ENCODE measurements at regions of chr1 and their contacts with region 1.

Region 1: GRCh38 chr1:234772345-234773147 is 162.6 kb upstream of the IRF2BP2 start:
- DNase-seq: peak; percentile 95
- H3K4me3 Mint-ChIP-seq: peak overlapping the region; percentile 49
- H3K27ac Mint-ChIP-seq: peak overlapping the region; percentile 84
- H3K4me1 Mint-ChIP-seq: peaks cover 54% of the 10 kb centered on the region
- H3K27me3 Mint-ChIP-seq: no peaks in the 10 kb centered on the region

Region 2: GRCh38 chr1:234599617-234600417 is 172.7 kb before region 1 on chr1:
- CTCF ChIA-PET with region 1: interaction called, 3 read pairs
- POLR2A ChIA-PET with region 1: interaction called, 6 read pairs
- intact Hi-C with region 1: loop called (anchors 2 kb)
- DNase-seq: peak; percentile 82
- H3K4me3 Mint-ChIP-seq: peak overlapping the region; percentile 85
- H3K27ac Mint-ChIP-seq: peak overlapping the region; percentile 100
- H3K4me1 Mint-ChIP-seq: peaks cover 54% of the 10 kb centered on the region
- H3K27me3 Mint-ChIP-seq: no peaks in the 10 kb centered on the region

Region 3: GRCh38 chr1:234722904-234723720 is 49.4 kb before region 1 on chr1:
- CTCF ChIA-PET with region 1: interaction called, 4 read pairs
- POLR2A ChIA-PET with region 1: interaction called, 14 read pairs
- intact Hi-C with region 1: loop called (anchors 1 kb)
- DNase-seq: peak; percentile 91
- H3K4me3 Mint-ChIP-seq: peak overlapping the region; percentile 60
- H3K27ac Mint-ChIP-seq: peak overlapping the region; percentile 96
- H3K4me1 Mint-ChIP-seq: peaks cover 66% of the 10 kb centered on the region
- H3K27me3 Mint-ChIP-seq: no peaks in the 10 kb centered on the region

Region 4: GRCh38 chr1:234730770-234731568 is 41.6 kb before region 1 on chr1:
- CTCF ChIA-PET with region 1: interaction called, 7 read pairs
- POLR2A ChIA-PET with region 1: interaction called, 3 read pairs
- intact Hi-C with region 1: loop called (anchors 1 kb)
- DNase-seq: peak; percentile 78
- H3K4me3 Mint-ChIP-seq: peak overlapping the region; percentile 40
- H3K27ac Mint-ChIP-seq: peak overlapping the region; percentile 99
- H3K4me1 Mint-ChIP-seq: peaks cover 77% of the 10 kb centered on the region
- H3K27me3 Mint-ChIP-seq: no peaks in the 10 kb centered on the region

Region 5: DNA sequence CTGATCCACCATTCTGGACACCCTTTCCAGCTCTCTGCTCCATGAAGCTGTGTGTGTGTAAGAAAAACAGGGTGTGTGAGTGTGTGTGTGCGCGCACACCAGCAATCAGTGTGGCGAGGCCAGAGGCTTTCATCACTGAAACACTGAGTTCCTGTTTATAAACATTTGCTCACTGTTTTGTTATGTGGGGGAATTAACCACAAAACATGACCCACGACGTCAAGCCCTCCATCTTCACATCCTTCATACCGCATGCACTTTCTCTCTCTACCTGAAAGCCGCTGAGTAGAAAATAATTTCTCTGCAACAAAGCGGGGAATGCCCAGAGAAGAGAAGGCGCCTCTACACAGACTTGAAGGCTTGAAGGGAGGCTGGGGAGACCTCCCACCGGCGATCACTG is 13.7 kb before region 1 on chr1:
- CTCF ChIA-PET with region 1: interaction called, 4 read pairs
- POLR2A ChIA-PET with region 1: no interaction called
- intact Hi-C with region 1: loop called (anchors 1 kb)
- DNase-seq: peak; percentile 68
- H3K4me3 Mint-ChIP-seq: peak overlapping the region; percentile 18
- H3K27ac Mint-ChIP-seq: peak overlapping the region; percentile 64
- H3K4me1 Mint-ChIP-seq: peaks cover 24% of the 10 kb centered on the region
- H3K27me3 Mint-ChIP-seq: peaks cover 4% of the 10 kb centered on the region

Region 6: GRCh38 chr1:234881893-234882771 is 109.6 kb after region 1 on chr1:
- CTCF ChIA-PET with region 1: interaction called, 3 read pairs
- POLR2A ChIA-PET with region 1: no interaction called
- intact Hi-C with region 1: loop called (anchors 5 kb)
- DNase-seq: peak; percentile 72
- H3K4me3 Mint-ChIP-seq: no peak overlapping the region
- H3K27ac Mint-ChIP-seq: peak overlapping the region; percentile 59
- H3K4me1 Mint-ChIP-seq: peaks cover 40% of the 10 kb centered on the region
- H3K27me3 Mint-ChIP-seq: no peaks in the 10 kb centered on the region